Activated naive CD4-positive, alpha-beta T cell treated with anti-CD3 and anti-CD28 coated beads for 36 hours (primary cell): ENCODE measurements at regions of chr2 and their contacts with region 1.

Region 1: GRCh38 chr2:9555297-9556141 is at the start of gene ADAM17:
- DNase-seq: peak; percentile 88
- H3K4me3 Mint-ChIP-seq: peak within 1 kb of the TSS; percentile 98
- H3K27ac Mint-ChIP-seq: peak within 1 kb of the TSS; percentile 96
- H3K4me1 Mint-ChIP-seq: peaks cover 46% of the 10 kb centered on the region
- H3K27me3 Mint-ChIP-seq: no peaks in the 10 kb centered on the region
- total RNA-seq, gene ADAM17: 10.5 to 11.0 TPM

Region 2: GRCh38 chr2:9474361-9474967 is 81.1 kb before region 1 on chr2 and contains the start of gene IAH1:
- CTCF ChIA-PET with region 1: interaction called, 9 read pairs
- intact Hi-C with region 1: loop called (anchors 1 kb)
- DNase-seq: peak; percentile 57
- H3K4me3 Mint-ChIP-seq: peak within 1 kb of the TSS; percentile 75
- H3K27ac Mint-ChIP-seq: peak within 1 kb of the TSS; percentile 72
- H3K4me1 Mint-ChIP-seq: peaks cover 33% of the 10 kb centered on the region
- H3K27me3 Mint-ChIP-seq: no peaks in the 10 kb centered on the region
- total RNA-seq, gene IAH1: 65.4 to 70.2 TPM

Region 3: GRCh38 chr2:9630749-9631483 is 75.4 kb after region 1 on chr2 and contains the start of gene YWHAQ:
- CTCF ChIA-PET with region 1: interaction called, 4 read pairs
- intact Hi-C with region 1: loop called (anchors 1 kb)
- DNase-seq: peak; percentile 95
- H3K4me3 Mint-ChIP-seq: peak within 1 kb of the TSS; percentile 97
- H3K27ac Mint-ChIP-seq: peak within 1 kb of the TSS; percentile 93
- H3K4me1 Mint-ChIP-seq: peaks cover 45% of the 10 kb centered on the region
- H3K27me3 Mint-ChIP-seq: no peaks in the 10 kb centered on the region
- total RNA-seq, gene YWHAQ: 248 to 261 TPM

Region 4: GRCh38 chr2:9663008-9663879 is 107.7 kb after region 1 on chr2:
- CTCF ChIA-PET with region 1: no interaction called
- intact Hi-C with region 1: no loop called
- DNase-seq: no peak
- H3K4me3 Mint-ChIP-seq: no peak overlapping the region
- H3K27ac Mint-ChIP-seq: no peak overlapping the region
- H3K4me1 Mint-ChIP-seq: peaks cover 6% of the 10 kb centered on the region
- H3K27me3 Mint-ChIP-seq: no peaks in the 10 kb centered on the region

Region 5: GRCh38 chr2:9753276-9753600 is 197.7 kb after region 1 on chr2:
- CTCF ChIA-PET with region 1: no interaction called
- intact Hi-C with region 1: loop called (anchors 1 kb)
- DNase-seq: peak; percentile 85
- H3K4me3 Mint-ChIP-seq: peak overlapping the region; percentile 23
- H3K27ac Mint-ChIP-seq: peak overlapping the region; percentile 65
- H3K4me1 Mint-ChIP-seq: peaks cover 39% of the 10 kb centered on the region
- H3K27me3 Mint-ChIP-seq: peaks cover 22% of the 10 kb centered on the region

Region 6: DNA sequence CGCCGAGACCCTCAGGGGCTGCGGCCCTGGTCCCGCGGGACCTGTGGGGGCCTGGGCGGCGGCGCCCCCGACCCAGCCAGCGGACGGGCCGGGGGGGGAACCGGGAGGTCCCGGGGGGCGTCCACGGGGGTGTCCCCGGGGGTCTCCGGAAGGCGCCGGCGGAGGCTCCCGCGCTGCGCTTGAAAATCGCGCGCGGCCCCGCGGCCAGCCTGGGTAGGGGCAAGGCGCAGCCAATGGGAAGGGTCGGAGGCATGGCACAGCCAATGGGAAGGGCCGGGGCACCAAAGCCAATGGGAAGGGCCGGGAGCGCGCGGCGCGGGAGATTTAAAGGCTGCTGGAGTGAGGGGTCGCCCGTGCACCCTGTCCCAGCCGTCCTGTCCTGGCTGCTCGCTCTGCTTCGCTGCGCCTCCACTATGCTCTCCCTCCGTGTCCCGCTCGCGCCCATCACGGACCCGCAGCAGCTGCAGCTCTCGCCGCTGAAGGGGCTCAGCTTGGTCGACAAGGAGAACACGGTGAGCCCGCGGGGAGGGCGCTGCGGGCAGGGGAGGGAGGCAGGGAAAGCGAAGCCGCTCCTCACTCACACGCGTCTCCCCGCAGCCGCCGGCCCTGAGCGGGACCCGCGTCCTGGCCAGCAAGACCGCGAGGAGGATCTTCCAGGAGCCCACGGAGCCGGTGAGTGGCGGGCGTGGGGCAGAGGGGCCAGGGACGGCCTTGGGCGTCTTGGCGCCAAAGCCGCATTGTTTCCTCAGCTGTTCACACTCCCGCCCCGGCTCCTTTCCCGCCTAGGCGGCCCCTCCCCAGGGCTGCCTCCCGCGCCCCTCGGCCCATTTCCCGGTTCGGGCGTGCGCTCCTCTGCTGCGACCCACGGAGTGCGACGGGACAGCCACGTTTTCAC is 567.1 kb after region 1 on chr2 and contains the start of gene RRM2:
- CTCF ChIA-PET with region 1: no interaction called
- intact Hi-C with region 1: loop called (anchors 1 kb)
- DNase-seq: peak; percentile 98
- H3K4me3 Mint-ChIP-seq: peak within 1 kb of the TSS; percentile 99
- H3K27ac Mint-ChIP-seq: peak within 1 kb of the TSS; percentile 99
- H3K4me1 Mint-ChIP-seq: peaks cover 27% of the 10 kb centered on the region
- H3K27me3 Mint-ChIP-seq: no peaks in the 10 kb centered on the region
- total RNA-seq, gene RRM2: 466 to 514 TPM